ENCODE measurements at regions of chr2 and their contacts with region 1.

Region 1: GRCh38 chr2:240434728-240435456 is 571 bp upstream of the GPC1 start:
- DNase-seq: peak; percentile 94
- ATAC-seq: peak; percentile 90
- H3K4me3 Mint-ChIP-seq: peak overlapping the region; percentile 85
- H3K27ac Mint-ChIP-seq: peak overlapping the region; percentile 46
- H3K4me1 Mint-ChIP-seq: peaks cover 11% of the 10 kb centered on the region
- H3K27me3 Mint-ChIP-seq: peaks cover 11% of the 10 kb centered on the region
- CTCF ChIP-seq: no peak

Region 2: DNA sequence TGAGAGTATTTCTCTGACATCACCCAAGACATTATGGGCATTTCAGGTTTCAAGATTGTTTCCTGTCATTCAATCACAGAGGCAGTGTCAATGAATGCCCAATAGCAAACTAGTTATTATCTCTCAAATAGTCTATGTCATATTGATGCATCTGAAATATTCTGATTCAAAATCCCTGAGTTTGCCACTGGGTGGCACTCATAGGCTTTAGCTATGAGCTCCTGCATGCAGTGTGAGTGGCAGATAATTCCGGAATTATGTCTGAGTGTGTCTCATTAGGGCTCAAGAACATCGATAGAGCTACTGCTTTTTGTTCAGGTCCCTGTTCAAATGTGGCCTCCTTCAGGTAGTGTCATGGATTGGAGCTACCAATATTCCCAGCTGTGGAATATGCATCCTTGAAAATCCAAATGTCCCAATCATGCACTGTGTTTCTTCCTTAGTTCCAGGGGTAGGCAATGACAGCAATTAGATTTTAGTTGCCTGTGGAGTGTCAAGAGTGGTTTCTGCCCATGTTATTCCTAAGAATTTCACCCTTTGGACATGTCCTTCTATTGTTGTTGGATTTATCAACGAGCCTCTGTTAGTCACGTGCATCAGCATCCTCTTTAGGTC is 373.8 kb before region 1 on chr2:
- CTCF ChIA-PET with region 1: no interaction called
- POLR2A ChIA-PET with region 1: no interaction called
- intact Hi-C with region 1: loop called (anchors 1 kb)
- DNase-seq: no peak
- ATAC-seq: peak; percentile 65
- H3K4me3 Mint-ChIP-seq: no peak overlapping the region
- H3K27ac Mint-ChIP-seq: no peak overlapping the region
- H3K4me1 Mint-ChIP-seq: no peaks in the 10 kb centered on the region
- H3K27me3 Mint-ChIP-seq: peaks cover 23% of the 10 kb centered on the region
- CTCF ChIP-seq: no peak

Region 3: DNA sequence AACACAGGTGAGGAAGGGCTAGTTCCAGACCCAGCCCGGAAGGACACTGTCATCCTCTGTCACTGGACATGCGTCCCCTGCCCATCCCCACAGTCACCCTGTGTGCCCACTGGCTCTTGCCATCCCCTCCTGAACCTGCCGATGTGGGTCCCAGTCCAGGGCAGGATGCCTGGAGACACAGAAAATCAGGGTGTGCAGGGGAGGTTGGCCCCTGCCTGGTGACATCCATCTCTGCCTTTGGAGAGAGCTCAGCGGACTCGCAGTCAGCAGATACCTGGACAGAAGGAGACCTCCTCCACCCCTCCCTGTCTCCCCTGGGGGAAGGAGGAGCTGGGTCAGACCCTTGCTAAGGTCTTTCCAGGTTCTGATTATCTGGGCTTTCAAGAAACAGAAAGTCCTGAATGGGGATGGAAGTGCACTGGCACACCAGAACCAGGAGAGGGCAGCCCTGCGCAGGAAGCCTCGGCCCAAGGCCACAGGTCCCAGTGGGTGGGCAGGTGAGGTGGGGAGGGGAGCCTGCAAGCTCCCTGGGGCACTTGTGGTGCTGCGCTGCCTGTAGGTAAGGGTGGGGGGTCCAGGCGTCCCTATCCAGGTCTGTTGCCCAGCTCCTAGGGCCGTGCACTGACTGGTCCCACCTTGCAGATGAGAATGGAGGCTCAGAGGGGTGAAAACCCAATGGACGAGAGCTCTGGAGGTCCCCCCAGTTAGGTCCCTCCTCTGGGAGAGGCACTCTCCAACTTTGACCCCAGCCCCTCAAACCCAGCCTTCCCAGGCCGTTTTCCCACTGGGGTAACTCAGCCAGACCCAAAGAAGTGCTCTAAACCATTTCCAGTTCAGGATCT is 284.7 kb before region 1 on chr2:
- CTCF ChIA-PET with region 1: no interaction called
- POLR2A ChIA-PET with region 1: interaction called, 3 read pairs
- intact Hi-C with region 1: loop called (anchors 1 kb)
- DNase-seq: no peak
- ATAC-seq: peak; percentile 60
- H3K4me3 Mint-ChIP-seq: no peak overlapping the region
- H3K27ac Mint-ChIP-seq: no peak overlapping the region
- H3K4me1 Mint-ChIP-seq: no peaks in the 10 kb centered on the region
- H3K27me3 Mint-ChIP-seq: peaks cover 12% of the 10 kb centered on the region
- CTCF ChIP-seq: no peak

Region 4: GRCh38 chr2:240566203-240567136 is 131.6 kb after region 1 on chr2:
- CTCF ChIA-PET with region 1: no interaction called
- POLR2A ChIA-PET with region 1: no interaction called
- intact Hi-C with region 1: loop called (anchors 1 kb)
- DNase-seq: peak; percentile 85
- ATAC-seq: peak; percentile 65
- H3K4me3 Mint-ChIP-seq: peak overlapping the region; percentile 88
- H3K27ac Mint-ChIP-seq: peak overlapping the region; percentile 96
- H3K4me1 Mint-ChIP-seq: peaks cover 85% of the 10 kb centered on the region
- H3K27me3 Mint-ChIP-seq: no peaks in the 10 kb centered on the region
- CTCF ChIP-seq: peak; percentile 56